Heart left ventricle (tissue), 16 donors: ENCODE measurements at regions of chr1 and their contacts with region 1.

Region 1: DNA sequence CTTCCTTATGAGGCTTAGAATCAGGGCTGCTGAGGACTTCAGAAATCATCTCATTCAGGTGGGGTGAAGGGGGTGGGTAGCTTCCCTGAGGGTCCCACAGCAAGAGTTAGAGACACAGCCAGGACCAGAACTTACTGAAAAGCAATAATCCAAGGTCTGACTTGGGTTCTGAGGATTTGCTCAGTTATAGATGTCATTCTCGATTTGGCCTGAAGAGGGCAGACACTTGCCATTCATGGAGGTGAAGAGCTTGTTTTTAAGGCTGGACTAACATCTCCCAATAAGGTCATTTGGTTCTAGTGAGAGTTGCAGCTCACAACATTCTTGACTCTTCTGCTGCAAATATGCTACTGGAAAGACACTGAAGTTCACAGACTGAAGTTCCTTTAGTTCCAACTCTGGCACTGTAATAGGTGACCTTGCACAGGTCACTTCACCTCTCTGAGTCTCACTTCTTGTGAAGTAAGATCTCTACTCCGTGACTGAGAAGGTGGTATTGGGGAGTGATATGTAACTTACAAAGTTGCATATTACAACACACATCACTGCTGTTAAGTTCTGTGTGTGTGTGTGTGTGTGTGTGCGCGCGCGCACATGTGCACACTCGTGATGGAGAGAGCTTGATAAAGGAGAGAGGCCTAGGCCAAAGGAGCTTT is 69.8 kb upstream of the DIRAS3 start:
- DNase-seq: peak in 1 of 5 donors; percentile 45
- ATAC-seq: peak; percentile 34 to 69 (median 64)
- H3K4me3 ChIP-seq: no peak overlapping the region
- H3K27ac ChIP-seq: peak overlapping the region in 1 of 12 donors; percentile 39
- H3K4me1 ChIP-seq: peaks cover 0 to 11% (median 0%) of the 10 kb centered on the region in 12 donors
- H3K27me3 ChIP-seq: no peaks in the 10 kb centered on the region
- CTCF ChIP-seq: peak; percentile 75 to 90 (median 85)
- POLR2A ChIP-seq: no peak

Region 2: DNA sequence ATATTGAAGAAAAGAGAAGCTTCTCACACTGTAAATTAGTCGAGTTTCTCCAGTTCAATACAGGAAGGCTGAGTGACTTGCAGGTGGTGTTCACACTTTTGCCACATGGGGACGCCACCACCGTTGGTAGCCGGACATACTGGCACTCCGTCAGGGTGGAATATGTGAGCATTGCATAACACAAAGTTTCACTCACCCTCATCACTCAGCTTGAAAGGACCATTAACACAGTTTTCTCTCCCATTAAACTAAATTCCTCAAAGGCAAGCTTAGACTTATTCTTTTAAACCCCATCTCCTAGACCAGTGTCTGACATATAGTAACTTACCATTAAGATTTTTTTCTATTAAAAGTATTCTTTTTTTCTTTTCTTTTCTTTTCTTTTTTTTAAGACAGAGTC is 584.8 kb before region 1 on chr1:
- intact Hi-C with region 1: loop called in 3 of 10 experiments (anchors 10 kb)
- DNase-seq: peak; percentile 64 to 80 (median 72)
- ATAC-seq: peak; percentile 63 to 89 (median 87)
- H3K4me3 ChIP-seq: no peak overlapping the region
- H3K27ac ChIP-seq: no peak overlapping the region
- H3K4me1 ChIP-seq: peaks cover 0 to 22% (median 5%) of the 10 kb centered on the region in 12 donors
- H3K27me3 ChIP-seq: no peaks in the 10 kb centered on the region
- CTCF ChIP-seq: peak; percentile 69 to 93 (median 88)
- POLR2A ChIP-seq: no peak

Region 3: DNA sequence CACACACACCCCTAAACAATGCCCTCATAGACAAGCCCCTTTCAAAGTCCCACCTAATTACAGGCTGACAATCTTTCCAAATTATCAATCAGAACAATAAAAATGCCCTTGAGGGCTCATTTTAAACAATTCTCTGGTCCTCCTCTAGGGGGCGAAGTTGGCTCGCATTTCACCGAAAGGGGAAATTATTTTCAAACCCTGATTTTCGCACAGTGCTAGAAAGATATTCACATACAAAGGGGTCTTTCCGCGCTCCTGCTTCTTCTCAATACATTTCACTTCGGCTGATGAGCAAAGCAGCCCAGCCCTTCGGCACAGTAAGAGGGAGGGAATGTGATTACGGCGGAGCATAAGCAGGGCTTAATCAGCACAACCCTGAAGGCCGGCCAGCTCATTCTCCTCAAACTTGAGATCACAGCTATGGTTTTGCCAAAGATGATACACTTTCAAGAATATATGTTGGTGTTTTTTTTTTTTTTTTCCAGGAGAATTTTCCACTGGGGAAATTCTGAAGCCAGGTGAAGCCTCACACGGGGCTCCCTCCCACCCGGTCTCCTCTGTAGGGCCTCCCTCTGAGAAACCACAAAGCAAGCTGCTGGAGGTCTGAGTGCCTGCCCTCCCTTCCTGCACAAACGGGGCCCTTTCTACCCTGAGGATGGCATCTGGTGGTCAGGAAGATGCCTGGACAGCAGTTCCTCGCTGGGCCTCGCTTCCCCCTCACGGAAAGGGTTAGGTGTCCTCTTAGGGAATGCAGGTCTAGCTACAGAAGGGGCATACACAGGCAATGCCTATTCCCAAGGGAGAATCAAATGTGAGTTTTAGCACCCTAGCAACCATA is 353.9 kb before region 1 on chr1:
- intact Hi-C with region 1: loop called in 3 of 10 experiments (anchors 5 kb)
- DNase-seq: peak in 3 of 5 donors; percentile 31 to 54 (median 42)
- ATAC-seq: peak in 3 of 4 donors; percentile 62 to 78 (median 73)
- H3K4me3 ChIP-seq: peak overlapping the region in 8 of 12 donors; percentile 11 to 49 (median 36)
- H3K27ac ChIP-seq: peak overlapping the region in 1 of 12 donors; percentile 37
- H3K4me1 ChIP-seq: peaks cover 0 to 22% (median 8%) of the 10 kb centered on the region in 12 donors
- H3K27me3 ChIP-seq: no peaks in the 10 kb centered on the region
- CTCF ChIP-seq: peak; percentile 67 to 82 (median 76)
- POLR2A ChIP-seq: no peak

Region 4: DNA sequence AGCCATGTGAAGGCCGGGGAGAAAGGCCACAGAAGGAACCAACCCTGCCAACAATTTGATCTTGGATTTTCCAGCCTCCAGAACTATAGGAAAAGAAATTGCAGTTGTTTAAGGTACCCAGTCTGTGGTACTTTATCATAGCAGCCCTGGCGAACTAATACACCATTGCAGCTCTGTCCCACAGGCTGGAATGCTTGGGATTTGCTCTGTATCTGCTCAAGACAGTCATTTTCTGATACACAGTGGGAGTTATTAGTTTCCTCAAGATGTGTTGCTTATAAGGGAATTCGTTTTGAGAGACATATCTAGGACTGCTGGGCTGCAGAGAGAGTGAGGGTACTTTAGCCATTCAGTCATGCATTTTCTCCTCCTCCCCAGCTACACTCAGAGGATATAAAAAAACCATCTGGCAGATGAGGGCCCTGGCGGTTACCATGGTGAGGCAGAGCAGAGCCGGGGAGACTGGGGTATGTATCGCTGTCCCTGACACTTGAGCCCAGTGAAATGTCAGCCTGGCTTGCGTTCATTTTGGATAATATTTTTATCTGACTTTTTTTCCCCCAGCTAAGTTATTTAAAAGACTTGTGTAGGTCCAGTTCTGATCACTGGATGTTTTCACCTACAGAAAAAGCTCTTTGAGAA is 174.4 kb before region 1 on chr1:
- intact Hi-C with region 1: no loop called
- DNase-seq: peak in 4 of 5 donors; percentile 37 to 64 (median 54)
- ATAC-seq: peak; percentile 82 to 94 (median 90)
- H3K4me3 ChIP-seq: no peak overlapping the region
- H3K27ac ChIP-seq: peak overlapping the region in 7 of 12 donors; percentile 38 to 76 (median 54)
- H3K4me1 ChIP-seq: peaks cover 0 to 24% (median 5%) of the 10 kb centered on the region in 12 donors
- H3K27me3 ChIP-seq: no peaks in the 10 kb centered on the region
- CTCF ChIP-seq: no peak
- POLR2A ChIP-seq: no peak

Region 5: DNA sequence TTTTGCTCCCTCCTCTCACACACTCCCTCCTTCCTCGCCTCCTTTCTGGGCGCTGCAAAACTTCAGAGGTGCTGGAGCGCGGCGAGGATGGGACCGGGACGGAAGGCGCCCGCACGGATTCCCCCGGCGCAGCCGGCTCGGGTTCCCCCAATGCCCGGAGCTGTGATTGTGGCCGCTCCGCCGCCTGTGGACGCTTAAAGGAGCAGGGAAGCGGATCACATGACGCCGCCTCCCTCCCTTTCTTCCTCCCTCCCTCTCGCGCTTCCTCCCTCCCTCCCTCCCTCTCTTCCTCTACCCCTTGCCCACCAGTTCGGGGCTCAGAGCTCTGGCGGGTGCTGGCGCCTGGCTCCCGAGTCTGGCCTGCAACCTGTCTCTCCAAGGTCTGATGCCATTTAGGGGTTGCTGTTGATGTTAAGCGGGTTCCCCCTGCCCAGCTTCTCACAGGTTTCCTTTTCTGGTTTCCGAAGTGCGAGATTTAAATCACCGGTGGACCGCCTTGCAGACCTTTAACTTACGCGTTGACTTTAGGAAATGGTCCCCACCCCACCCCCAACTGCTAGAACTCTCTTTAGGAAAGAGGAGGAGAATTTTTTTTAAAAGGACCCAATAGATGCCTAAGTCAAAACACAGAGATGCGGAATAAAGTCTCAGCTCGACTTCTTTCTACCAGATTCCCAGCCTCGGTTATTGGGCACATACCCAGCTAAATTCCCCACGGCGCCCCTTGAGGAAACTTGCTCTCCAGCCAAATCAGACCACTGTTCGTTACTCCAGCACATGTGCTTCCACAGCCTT is 112.3 kb after region 1 on chr1 and contains the start of gene WLS:
- intact Hi-C with region 1: loop called in 5 of 10 experiments (anchors 2 to 5 kb)
- DNase-seq: peak; percentile 83 to 90 (median 87)
- ATAC-seq: peak; percentile 77 to 88 (median 87)
- H3K4me3 ChIP-seq: peak within 1 kb of the TSS; percentile 58 to 93 (median 78)
- H3K27ac ChIP-seq: peak within 1 kb of the TSS; percentile 47 to 93 (median 83)
- H3K4me1 ChIP-seq: peaks cover 0 to 39% (median 15%) of the 10 kb centered on the region in 12 donors
- H3K27me3 ChIP-seq: peaks cover 0 to 13% (median 0%) of the 10 kb centered on the region in 9 donors
- CTCF ChIP-seq: peak in 3 of 12 donors; percentile 9 to 35 (median 30)
- POLR2A ChIP-seq: peak; percentile 57 to 81
- total RNA-seq, gene WLS: 78.2 to 115 (median 107) TPM

Region 6: DNA sequence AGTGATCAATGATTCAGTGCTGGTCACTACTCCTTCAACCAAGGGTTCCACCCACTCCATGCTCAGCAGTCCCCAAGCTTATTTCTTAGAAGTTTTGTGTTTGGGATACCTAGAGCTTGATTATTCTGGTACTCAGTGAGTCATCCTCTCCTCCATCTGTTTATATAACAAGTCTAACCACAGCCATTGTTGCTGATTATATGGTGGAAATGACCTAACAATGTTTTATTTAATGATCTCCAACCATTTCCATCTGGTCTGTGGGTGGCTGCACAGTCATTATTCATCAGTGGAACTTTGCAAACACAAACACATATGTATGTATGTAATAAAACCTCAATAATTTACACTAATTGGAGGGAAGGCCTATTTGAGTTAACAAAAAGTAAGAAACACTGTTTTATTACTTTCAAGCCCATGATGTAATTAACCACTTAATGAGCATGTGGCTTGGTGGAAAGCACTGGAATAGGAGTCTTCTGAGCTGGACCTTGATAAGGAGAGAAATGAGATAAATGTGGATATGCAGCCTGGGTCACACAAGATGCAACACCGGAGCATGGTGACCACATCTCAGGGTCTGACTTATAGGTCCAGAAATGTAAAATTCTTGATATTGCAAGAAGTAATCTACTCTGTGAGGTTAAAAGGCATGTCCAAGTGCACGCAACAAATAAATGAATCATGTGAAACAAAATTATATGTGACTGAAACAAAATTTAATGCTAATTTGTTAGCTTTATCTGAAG is 211.0 kb after region 1 on chr1:
- intact Hi-C with region 1: loop called in 1 of 10 experiments (anchors 5 kb)
- DNase-seq: no peak
- ATAC-seq: peak in 2 of 4 donors; percentile 41 to 51
- H3K4me3 ChIP-seq: no peak overlapping the region
- H3K27ac ChIP-seq: no peak overlapping the region
- H3K4me1 ChIP-seq: peaks cover 0 to 11% (median 0%) of the 10 kb centered on the region in 12 donors
- H3K27me3 ChIP-seq: no peaks in the 10 kb centered on the region
- CTCF ChIP-seq: no peak
- POLR2A ChIP-seq: no peak

Region 7: GRCh38 chr1:68442822-68443556 is 322.7 kb after region 1 on chr1:
- intact Hi-C with region 1: loop called in 8 of 10 experiments (anchors 2 to 10 kb)
- DNase-seq: no peak
- ATAC-seq: peak in 3 of 4 donors; percentile 42 to 64 (median 61)
- H3K4me3 ChIP-seq: no peak overlapping the region
- H3K27ac ChIP-seq: no peak overlapping the region
- H3K4me1 ChIP-seq: no peaks in the 10 kb centered on the region
- H3K27me3 ChIP-seq: no peaks in the 10 kb centered on the region
- CTCF ChIP-seq: peak; percentile 33 to 64 (median 57)
- POLR2A ChIP-seq: no peak